ENCODE measurements at regions of chr19 and their contacts with region 1.

Region 1: GRCh38 chr19:34744896-34745690 is 11.1 kb downstream of the ZNF181 start:
- DNase-seq: no peak
- ATAC-seq: no peak
- H3K4me3 ChIP-seq: no peak overlapping the region
- H3K27ac ChIP-seq: no peak overlapping the region
- H3K4me1 ChIP-seq: no peaks in the 10 kb centered on the region
- H3K27me3 ChIP-seq: no peaks in the 10 kb centered on the region
- CTCF ChIP-seq: no peak
- POLR2A ChIP-seq: no peak

Region 2: DNA sequence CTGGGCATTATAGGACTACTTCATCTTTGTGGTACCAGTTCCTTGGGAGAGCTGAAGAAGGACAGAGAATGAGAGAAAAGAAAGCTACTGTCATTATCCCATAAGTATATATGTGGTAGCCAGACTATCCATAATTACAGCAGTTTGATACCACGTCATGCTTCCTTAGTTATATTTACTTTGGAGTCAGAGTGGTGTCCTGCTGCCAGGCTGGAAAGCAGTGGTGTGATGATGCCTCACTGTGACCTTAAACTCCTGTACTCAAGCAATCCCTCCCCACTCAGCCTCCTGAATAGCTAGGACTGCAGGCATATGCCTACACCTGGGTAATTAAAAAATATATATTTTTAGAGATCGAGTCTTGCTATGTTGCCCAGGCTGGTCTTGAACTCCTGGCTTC is 205.7 kb before region 1 on chr19:
- intact Hi-C with region 1: loop called in 1 of 2 experiments (anchors 5 kb)
- DNase-seq: no peak
- ATAC-seq: no peak
- H3K4me3 ChIP-seq: no peak overlapping the region
- H3K27ac ChIP-seq: no peak overlapping the region
- H3K4me1 ChIP-seq: no peaks in the 10 kb centered on the region
- H3K27me3 ChIP-seq: no peaks in the 10 kb centered on the region
- CTCF ChIP-seq: no peak
- POLR2A ChIP-seq: no peak

Region 3: DNA sequence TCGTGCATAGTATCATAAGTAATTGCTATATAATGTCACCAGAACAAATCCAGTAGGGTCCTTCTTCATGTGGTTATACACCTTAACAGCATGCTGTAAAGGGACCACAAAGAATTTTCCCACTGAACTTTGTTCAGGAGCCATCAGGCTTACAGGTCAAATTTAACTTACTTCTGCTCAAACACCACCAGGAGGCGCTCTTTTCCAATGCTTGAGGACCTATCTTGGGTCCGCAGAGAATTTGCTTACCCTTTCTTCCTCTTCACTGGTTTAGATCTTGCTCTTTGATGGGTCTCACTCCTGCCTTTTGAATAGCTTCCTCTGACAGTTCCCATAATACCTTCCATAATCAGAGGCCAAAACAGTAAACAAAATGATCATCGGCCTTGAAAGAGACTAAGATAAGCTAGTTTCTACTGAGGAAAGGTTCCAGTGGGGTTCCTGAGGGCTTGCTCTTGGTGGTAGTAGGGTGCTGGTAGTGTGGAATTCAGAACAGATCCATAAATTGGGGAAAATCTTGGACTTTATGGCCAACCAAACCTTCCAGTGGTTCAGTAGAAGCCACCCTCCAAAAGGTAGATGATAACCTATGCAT is 105.5 kb before region 1 on chr19:
- intact Hi-C with region 1: no loop called
- DNase-seq: peak in 1 of 3 donors; percentile 63
- ATAC-seq: peak; percentile 87 to 95 (median 92)
- H3K4me3 ChIP-seq: no peak overlapping the region
- H3K27ac ChIP-seq: no peak overlapping the region
- H3K4me1 ChIP-seq: peaks cover 0 to 3% (median 0%) of the 10 kb centered on the region in 4 donors
- H3K27me3 ChIP-seq: no peaks in the 10 kb centered on the region
- CTCF ChIP-seq: peak; percentile 81 to 94 (median 87)
- POLR2A ChIP-seq: no peak

Measured in right lobe of liver (tissue), 6 donors.